CD8-positive, alpha-beta T cell (primary cell): ENCODE measurements at regions of chr19 and their contacts with region 1.

Region 1: DNA sequence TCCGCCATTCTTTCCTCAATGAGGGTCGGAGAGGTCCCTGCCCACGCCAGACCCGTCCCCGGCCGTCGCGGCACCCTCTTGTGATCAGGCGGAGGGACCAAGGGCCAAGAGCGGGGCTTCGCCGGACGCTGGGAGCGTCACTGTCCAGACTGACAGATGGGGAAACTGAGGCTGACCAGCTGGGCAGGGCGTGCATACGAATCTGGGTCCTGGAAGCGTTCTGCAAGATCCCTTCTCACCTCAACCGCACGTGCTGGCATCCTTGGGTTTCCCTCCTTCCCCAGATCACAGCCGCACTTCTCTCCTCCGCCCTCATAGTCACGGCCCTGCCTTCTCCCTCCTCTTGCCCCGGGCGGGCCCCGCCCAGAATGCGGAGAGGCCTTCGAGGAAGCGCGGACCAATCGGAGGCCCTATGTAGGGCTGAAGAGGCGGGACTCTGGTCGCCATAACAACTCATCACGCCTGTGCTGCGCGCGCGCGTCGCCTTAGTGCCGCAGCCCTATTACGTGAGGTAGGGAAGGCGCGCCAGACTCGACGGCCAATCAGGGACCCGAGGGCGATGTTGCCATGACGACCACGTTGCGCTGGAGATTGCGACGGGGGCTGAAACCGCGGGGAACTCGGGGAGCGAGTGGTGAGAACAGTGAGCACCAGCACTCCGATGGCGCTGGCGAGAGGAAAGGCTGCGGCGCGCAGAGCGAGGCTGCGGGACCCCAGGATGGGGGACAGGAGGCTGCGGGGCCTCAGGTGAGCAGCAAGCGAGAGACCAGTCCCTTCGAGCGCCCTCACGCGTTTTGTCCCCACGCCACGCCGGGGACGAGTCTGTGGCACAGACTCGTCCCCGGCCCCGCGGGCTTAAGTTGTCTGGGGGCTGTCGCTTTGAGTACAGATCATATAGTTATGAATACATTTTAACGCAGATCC is 5.7 kb downstream of the RNF225 start:
- DNase-seq: peak; percentile 97 to 100 (median 99)
- ATAC-seq: peak; percentile 97
- H3K4me3 ChIP-seq: peak overlapping the region; percentile 72 to 77
- H3K4me3 Mint-ChIP-seq: peak overlapping the region; percentile 93
- H3K27ac ChIP-seq: peak overlapping the region; percentile 93 to 94
- H3K27ac Mint-ChIP-seq: peak overlapping the region; percentile 96
- H3K4me1 ChIP-seq: peaks cover 12% of the 10 kb centered on the region
- H3K4me1 Mint-ChIP-seq: peaks cover 15% of the 10 kb centered on the region
- H3K27me3 ChIP-seq: peaks cover 0 to 4% of the 10 kb centered on the region in 2 experiments
- H3K27me3 Mint-ChIP-seq: peaks cover 10% of the 10 kb centered on the region
- CTCF ChIP-seq: no peak

Region 2: GRCh38 chr19:58278157-58279041 is 122.8 kb before region 1 on chr19 and contains the start of gene ZNF8:
- CTCF ChIA-PET with region 1: no interaction called
- POLR2A ChIA-PET with region 1: no interaction called
- intact Hi-C with region 1: loop called in 1 of 2 experiments (anchors 1 kb)
- DNase-seq: peak; percentile 89 to 99 (median 97)
- ATAC-seq: peak; percentile 97
- H3K4me3 ChIP-seq: peak within 1 kb of the TSS; percentile 67 to 92
- H3K4me3 Mint-ChIP-seq: peak within 1 kb of the TSS; percentile 99
- H3K27ac ChIP-seq: peak within 1 kb of the TSS; percentile 72 to 85
- H3K27ac Mint-ChIP-seq: peak within 1 kb of the TSS; percentile 96
- H3K4me1 ChIP-seq: peaks cover 26% of the 10 kb centered on the region
- H3K4me1 Mint-ChIP-seq: peaks cover 50% of the 10 kb centered on the region
- H3K27me3 ChIP-seq: no peaks in the 10 kb centered on the region
- H3K27me3 Mint-ChIP-seq: no peaks in the 10 kb centered on the region
- CTCF ChIP-seq: no peak
- total RNA-seq, gene ZNF8: 9.2 to 9.5 TPM

Region 3: DNA sequence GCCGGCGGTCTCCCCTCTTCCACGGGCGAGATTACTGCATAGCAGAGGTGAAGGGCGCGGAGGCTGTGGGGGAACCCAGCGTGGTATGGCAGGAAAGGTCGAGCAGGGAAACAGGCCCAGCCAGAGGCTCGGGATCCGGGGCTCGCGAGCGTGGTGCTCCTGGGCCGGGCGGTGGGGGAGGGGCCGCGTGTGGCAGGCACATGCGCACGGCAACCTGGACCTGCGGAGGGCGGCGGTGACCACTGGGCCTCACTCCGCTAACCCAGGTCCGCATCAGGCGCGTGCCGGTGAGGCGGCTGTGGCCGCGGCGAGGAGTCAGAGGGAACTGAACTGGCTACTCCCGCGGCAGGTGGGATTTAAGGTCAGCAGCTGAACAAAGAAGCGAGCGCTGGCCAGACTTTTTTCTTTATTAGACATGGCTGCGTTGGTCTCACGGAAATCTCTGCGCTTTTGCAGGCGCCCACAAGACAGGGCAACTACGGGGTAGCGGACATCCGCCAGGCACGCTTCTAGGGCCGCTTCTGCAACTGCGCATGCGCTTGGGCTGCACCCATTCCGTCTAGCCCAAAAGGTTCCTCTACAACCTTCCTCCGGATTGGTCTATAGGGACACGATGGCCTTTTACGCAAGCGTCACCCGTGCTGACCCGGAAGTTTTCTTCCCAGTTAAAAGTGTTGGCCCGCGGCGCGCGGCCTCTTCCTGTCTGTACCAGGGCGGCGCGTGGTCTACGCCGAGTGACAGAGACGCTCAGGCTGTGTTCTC is 14.4 kb before region 1 on chr19 and contains the start of gene RPS5:
- CTCF ChIA-PET with region 1: no interaction called
- POLR2A ChIA-PET with region 1: interaction called, 3 read pairs
- intact Hi-C with region 1: loop called (anchors 1 kb)
- DNase-seq: peak; percentile 92 to 100 (median 95)
- ATAC-seq: peak; percentile 88
- H3K4me3 ChIP-seq: peak within 1 kb of the TSS; percentile 88 to 90
- H3K4me3 Mint-ChIP-seq: peak within 1 kb of the TSS; percentile 93
- H3K27ac ChIP-seq: peak within 1 kb of the TSS; percentile 94 to 98
- H3K27ac Mint-ChIP-seq: peak within 1 kb of the TSS; percentile 99
- H3K4me1 ChIP-seq: peaks cover 41% of the 10 kb centered on the region
- H3K4me1 Mint-ChIP-seq: peaks cover 52% of the 10 kb centered on the region
- H3K27me3 ChIP-seq: no peaks in the 10 kb centered on the region
- H3K27me3 Mint-ChIP-seq: no peaks in the 10 kb centered on the region
- CTCF ChIP-seq: no peak
- total RNA-seq, gene RPS5: 1,884 to 1,887 TPM

Region 4: DNA sequence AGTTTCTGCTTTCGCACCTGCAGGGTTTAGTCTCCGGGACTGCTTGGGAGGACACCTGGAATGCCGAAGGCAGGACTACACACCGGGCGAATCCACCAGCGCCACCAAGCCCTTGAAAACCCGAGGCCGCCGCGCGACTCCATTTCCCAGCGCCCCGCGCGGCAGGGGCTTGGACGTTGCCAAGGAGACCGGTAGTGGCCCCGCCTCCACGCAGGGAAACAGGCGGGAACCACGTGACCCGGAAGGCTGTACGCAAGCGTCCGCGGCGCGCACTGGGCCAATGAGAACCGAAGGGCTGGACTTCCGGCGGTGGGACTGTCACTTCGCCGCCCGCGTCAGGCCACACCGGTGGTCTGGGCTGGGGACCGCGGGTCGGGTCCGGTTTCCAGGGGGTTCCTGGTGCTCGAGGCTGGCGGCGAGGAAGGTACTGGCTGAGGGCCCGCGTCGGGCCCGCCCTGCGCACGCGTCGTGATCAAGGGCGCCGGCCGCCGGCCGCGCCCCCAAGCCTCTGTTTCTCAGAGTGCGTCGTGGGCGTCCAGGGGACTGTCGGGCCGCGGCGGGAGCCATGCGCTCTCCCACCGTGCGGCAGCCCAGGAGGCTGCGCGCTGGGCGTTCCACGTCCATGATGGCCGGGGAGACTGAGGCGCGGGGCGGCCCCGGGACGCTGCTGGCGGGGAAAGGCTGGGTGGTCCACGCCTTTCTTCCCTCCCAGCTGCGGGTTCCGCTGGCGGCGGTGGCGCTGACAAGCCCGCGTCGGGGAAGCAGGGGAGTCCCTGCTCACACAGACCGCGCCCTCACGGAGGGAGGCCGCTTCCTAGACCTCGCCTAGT is 65.8 kb after region 1 on chr19 and contains the start of gene ZNF324:
- CTCF ChIA-PET with region 1: no interaction called
- POLR2A ChIA-PET with region 1: no interaction called
- intact Hi-C with region 1: loop called in 1 of 2 experiments (anchors 2 kb)
- DNase-seq: peak; percentile 93 to 99 (median 98)
- ATAC-seq: peak; percentile 88
- H3K4me3 ChIP-seq: peak within 1 kb of the TSS; percentile 63 to 93
- H3K4me3 Mint-ChIP-seq: peak within 1 kb of the TSS; percentile 87
- H3K27ac ChIP-seq: peak within 1 kb of the TSS; percentile 88 to 91
- H3K27ac Mint-ChIP-seq: peak within 1 kb of the TSS; percentile 89
- H3K4me1 ChIP-seq: peaks cover 10% of the 10 kb centered on the region
- H3K4me1 Mint-ChIP-seq: peaks cover 25% of the 10 kb centered on the region
- H3K27me3 ChIP-seq: peaks cover 0 to 3% of the 10 kb centered on the region in 2 experiments
- H3K27me3 Mint-ChIP-seq: no peaks in the 10 kb centered on the region
- CTCF ChIP-seq: no peak
- total RNA-seq, gene ZNF324: 26.9 to 30.5 TPM

Region 5: DNA sequence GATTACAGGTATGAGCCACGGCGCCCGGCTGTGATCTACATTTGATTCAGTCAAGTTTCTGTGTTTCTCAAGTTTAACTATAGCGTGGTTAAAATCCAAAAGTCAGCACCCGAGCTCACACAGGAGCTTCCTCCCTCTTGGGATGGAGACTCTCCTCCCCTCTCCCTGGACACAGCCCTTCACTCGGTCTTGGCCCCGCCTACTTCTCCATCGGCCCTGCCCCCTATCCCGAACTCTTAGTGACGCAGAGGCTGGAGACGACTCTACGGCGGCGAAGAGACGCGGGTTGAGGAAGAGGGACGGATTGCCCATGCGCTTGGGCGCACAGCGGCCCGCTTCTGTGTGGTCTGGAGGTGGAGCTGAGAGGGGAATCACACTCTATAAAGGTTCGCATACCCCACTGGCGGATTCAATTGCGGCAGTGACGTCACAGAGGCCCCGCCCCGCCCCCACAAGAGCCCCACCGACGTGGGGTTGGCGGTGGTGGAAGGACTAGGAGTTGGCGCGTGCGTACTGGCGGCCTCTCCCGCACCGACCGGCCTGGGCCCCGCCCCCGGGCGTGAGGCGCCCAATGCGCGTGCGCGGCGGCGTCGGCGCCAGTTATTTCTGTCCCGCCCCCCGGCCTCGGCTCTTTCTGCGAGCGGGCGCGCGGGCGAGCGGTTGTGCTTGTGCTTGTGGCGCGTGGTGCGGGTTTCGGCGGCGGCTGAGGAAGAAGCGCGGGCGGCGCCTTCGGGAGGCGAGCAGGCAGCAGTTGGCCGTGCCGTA is 142.8 kb after region 1 on chr19 and contains the start of gene TRIM28:
- CTCF ChIA-PET with region 1: no interaction called
- POLR2A ChIA-PET with region 1: no interaction called
- intact Hi-C with region 1: loop called in 1 of 2 experiments (anchors 1 kb)
- DNase-seq: peak; percentile 99 to 100 (median 100)
- ATAC-seq: peak; percentile 85
- H3K4me3 ChIP-seq: peak within 1 kb of the TSS; percentile 68 to 71
- H3K4me3 Mint-ChIP-seq: peak within 1 kb of the TSS; percentile 93
- H3K27ac ChIP-seq: peak within 1 kb of the TSS; percentile 90 to 93
- H3K27ac Mint-ChIP-seq: peak within 1 kb of the TSS; percentile 99
- H3K4me1 ChIP-seq: peaks cover 17% of the 10 kb centered on the region
- H3K4me1 Mint-ChIP-seq: peaks cover 24% of the 10 kb centered on the region
- H3K27me3 ChIP-seq: peaks cover 0 to 13% of the 10 kb centered on the region in 2 experiments
- H3K27me3 Mint-ChIP-seq: peaks cover 10% of the 10 kb centered on the region
- CTCF ChIP-seq: no peak
- total RNA-seq, gene TRIM28: 525 to 549 TPM